Transverse colon (tissue), 4 donors: ENCODE measurements at regions of chr4 and their contacts with region 1.

Region 1: GRCh38 chr4:97917115-97917514 is 226.2 kb downstream of the STPG2 start:
- DNase-seq: no peak
- H3K4me3 ChIP-seq: no peak overlapping the region
- H3K27ac ChIP-seq: no peak overlapping the region
- H3K4me1 ChIP-seq: no peaks in the 10 kb centered on the region
- H3K27me3 ChIP-seq: no peaks in the 10 kb centered on the region
- CTCF ChIP-seq: no peak
- EP300 ChIP-seq: no peak
- POLR2A ChIP-seq: no peak

Region 2: GRCh38 chr4:96035727-96036126 is 1881.4 kb before region 1 on chr4:
- in situ Hi-C with region 1: no loop called
- intact Hi-C with region 1: loop called (anchors 5 kb)
- DNase-seq: no peak
- H3K4me3 ChIP-seq: no peak overlapping the region
- H3K27ac ChIP-seq: no peak overlapping the region
- H3K4me1 ChIP-seq: no peaks in the 10 kb centered on the region
- H3K27me3 ChIP-seq: no peaks in the 10 kb centered on the region
- CTCF ChIP-seq: peak in 1 of 5 experiments; percentile 7
- EP300 ChIP-seq: no peak
- POLR2A ChIP-seq: no peak

Region 3: DNA sequence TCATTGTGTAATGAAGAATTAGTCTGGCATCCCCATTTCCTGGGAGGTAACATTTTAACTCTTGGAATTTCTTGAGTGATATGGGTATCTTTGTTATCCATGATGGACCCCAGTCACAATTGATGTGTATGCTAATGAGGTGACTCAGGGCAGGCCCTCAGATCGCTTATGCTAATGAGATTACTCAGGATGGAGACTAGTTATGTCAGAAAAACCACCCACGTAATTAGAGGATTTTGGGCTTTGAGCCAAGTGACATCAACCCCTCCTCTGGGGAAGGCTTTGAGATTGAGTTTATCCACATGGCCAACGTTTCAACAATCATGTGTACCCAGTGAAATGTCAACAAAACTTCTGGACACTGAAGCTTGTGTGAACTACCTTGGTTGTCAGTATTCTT is 546.5 kb before region 1 on chr4:
- in situ Hi-C with region 1: no loop called
- intact Hi-C with region 1: no loop called
- DNase-seq: no peak
- H3K4me3 ChIP-seq: no peak overlapping the region
- H3K27ac ChIP-seq: no peak overlapping the region
- H3K4me1 ChIP-seq: no peaks in the 10 kb centered on the region
- H3K27me3 ChIP-seq: no peaks in the 10 kb centered on the region
- CTCF ChIP-seq: no peak
- EP300 ChIP-seq: no peak
- POLR2A ChIP-seq: no peak